B cell (primary cell): ENCODE measurements at regions of chr15 and their contacts with region 1.

Region 1: DNA sequence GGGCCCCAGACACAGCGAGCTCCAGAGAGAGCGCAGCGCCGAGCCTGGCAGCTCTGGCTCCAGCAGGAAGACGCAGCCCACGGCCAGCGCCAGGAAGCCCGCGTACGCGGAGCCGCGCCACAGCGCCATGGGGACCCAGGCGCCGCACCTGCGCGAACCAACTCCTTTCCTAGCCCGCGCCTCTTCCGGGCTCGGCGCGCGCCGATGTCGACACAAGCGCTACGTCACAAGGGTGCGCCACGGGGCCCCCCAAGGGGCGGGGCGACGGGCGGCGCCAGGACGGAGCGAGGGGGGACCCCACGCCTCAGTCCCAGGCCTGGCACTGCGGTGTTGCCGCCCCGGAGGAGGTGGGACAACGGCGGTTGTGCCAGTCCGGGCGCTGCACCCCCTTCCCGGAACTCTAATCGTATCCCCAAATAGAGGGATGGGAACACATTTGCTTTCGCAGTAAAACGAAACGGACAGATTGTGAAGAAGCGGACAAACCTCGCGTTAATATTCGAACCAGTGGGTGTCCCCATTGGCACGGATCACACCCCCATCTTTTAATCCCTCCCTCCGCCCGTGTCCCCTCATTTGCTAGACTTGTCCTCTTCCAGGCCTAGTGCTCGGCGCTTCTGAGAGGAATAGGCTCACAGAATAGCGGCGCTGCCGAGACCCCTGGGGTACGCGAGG is at the start of gene ADPGK:
- DNase-seq: peak; percentile 98
- ATAC-seq: peak; percentile 84
- H3K4me3 ChIP-seq: peak within 1 kb of the TSS; percentile 65 to 97 (median 95)
- H3K4me3 Mint-ChIP-seq: peak within 1 kb of the TSS; percentile 92
- H3K27ac ChIP-seq: peak within 1 kb of the TSS; percentile 97 to 98
- H3K27ac Mint-ChIP-seq: peak within 1 kb of the TSS; percentile 97
- H3K4me1 ChIP-seq: peaks cover 28 to 32% of the 10 kb centered on the region in 2 donors
- H3K4me1 Mint-ChIP-seq: peaks cover 41% of the 10 kb centered on the region
- H3K27me3 ChIP-seq: no peaks in the 10 kb centered on the region
- H3K27me3 Mint-ChIP-seq: no peaks in the 10 kb centered on the region
- CTCF ChIP-seq: no peak
- total RNA-seq, gene ADPGK: 128 and 135 TPM in 2 replicates

Region 2: GRCh38 chr15:72231066-72231846 is 552.4 kb before region 1 on chr15 and contains the start of gene PKM:
- CTCF ChIA-PET with region 1: no interaction called
- POLR2A ChIA-PET with region 1: interaction called, 14 read pairs
- intact Hi-C with region 1: loop called (anchors 5 kb)
- DNase-seq: peak; percentile 96
- ATAC-seq: peak; percentile 52
- H3K4me3 ChIP-seq: peak within 1 kb of the TSS; percentile 77 to 96 (median 93)
- H3K4me3 Mint-ChIP-seq: peak within 1 kb of the TSS; percentile 94
- H3K27ac ChIP-seq: peak within 1 kb of the TSS; percentile 91 to 94
- H3K27ac Mint-ChIP-seq: peak within 1 kb of the TSS; percentile 97
- H3K4me1 ChIP-seq: peaks cover 37 to 44% of the 10 kb centered on the region in 2 donors
- H3K4me1 Mint-ChIP-seq: peaks cover 38% of the 10 kb centered on the region
- H3K27me3 ChIP-seq: no peaks in the 10 kb centered on the region
- H3K27me3 Mint-ChIP-seq: no peaks in the 10 kb centered on the region
- CTCF ChIP-seq: no peak
- total RNA-seq, gene PKM: 306 and 323 TPM in 2 replicates

Region 3: DNA sequence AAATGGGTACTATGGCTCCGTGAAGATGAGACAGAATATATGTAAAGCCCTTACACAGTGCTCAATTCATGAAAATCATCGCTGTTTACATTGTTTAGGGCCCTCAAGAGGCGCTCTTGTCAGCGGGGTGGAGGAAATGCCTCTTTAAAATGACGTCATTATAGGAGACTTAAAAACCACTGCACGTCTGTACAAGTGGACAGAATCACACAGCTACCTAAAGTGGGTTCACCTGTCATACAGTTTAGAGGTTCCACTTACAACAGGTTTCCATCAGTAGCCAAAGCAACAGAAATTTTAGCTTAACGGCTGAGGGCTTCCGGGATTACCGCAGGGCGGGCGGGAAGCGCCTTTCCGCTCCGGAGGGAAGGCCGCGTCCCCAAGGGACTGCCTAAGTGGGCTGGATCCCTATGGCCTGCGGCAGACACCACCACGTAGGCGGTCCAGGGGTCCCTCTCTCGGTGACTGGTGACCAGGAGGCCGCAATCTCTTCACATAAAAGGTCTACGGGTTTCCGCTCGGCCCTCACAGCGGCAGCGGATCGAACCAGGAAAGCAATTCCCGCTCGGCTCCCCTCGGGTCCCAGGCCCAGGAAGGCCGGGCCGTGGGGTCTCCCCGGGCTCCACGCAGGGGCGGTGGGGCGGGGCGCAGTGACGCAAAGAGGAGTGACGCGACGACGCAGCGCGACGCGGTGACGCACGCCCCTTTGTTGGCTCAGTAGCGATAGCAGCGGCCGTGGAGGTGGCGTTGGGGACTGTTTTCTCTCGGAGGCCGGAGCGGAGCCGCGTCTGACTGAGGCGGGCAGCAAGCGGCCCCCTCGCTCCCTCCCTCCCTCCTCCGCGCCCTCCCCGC is 309.9 kb before region 1 on chr15 and contains the start of gene ARIH1:
- CTCF ChIA-PET with region 1: no interaction called
- POLR2A ChIA-PET with region 1: no interaction called
- intact Hi-C with region 1: loop called (anchors 5 kb)
- DNase-seq: peak; percentile 99
- ATAC-seq: peak; percentile 74
- H3K4me3 ChIP-seq: peak within 1 kb of the TSS; percentile 90 to 98 (median 97)
- H3K4me3 Mint-ChIP-seq: peak within 1 kb of the TSS; percentile 95
- H3K27ac ChIP-seq: peak within 1 kb of the TSS; percentile 100
- H3K27ac Mint-ChIP-seq: peak within 1 kb of the TSS; percentile 99
- H3K4me1 ChIP-seq: peaks cover 26 to 38% of the 10 kb centered on the region in 2 donors
- H3K4me1 Mint-ChIP-seq: peaks cover 42% of the 10 kb centered on the region
- H3K27me3 ChIP-seq: no peaks in the 10 kb centered on the region
- H3K27me3 Mint-ChIP-seq: no peaks in the 10 kb centered on the region
- CTCF ChIP-seq: peak; percentile 34
- total RNA-seq, gene ARIH1: 199 and 227 TPM in 2 replicates

Region 4: GRCh38 chr15:72671535-72671934 is 112.2 kb before region 1 on chr15:
- CTCF ChIA-PET with region 1: no interaction called
- POLR2A ChIA-PET with region 1: no interaction called
- intact Hi-C with region 1: no loop called
- DNase-seq: no peak
- ATAC-seq: no peak
- H3K4me3 ChIP-seq: no peak overlapping the region
- H3K4me3 Mint-ChIP-seq: no peak overlapping the region
- H3K27ac ChIP-seq: no peak overlapping the region
- H3K27ac Mint-ChIP-seq: no peak overlapping the region
- H3K4me1 ChIP-seq: peaks cover 3 to 5% of the 10 kb centered on the region in 2 donors
- H3K4me1 Mint-ChIP-seq: peaks cover 4% of the 10 kb centered on the region
- H3K27me3 ChIP-seq: peaks cover 0 to 5% (median 2%) of the 10 kb centered on the region in 4 experiments
- H3K27me3 Mint-ChIP-seq: peaks cover 15% of the 10 kb centered on the region
- CTCF ChIP-seq: no peak

Region 5: GRCh38 chr15:72770673-72771328 is 12.9 kb before region 1 on chr15:
- CTCF ChIA-PET with region 1: interaction called, 5 read pairs
- POLR2A ChIA-PET with region 1: no interaction called
- intact Hi-C with region 1: loop called (anchors 1 kb)
- DNase-seq: no peak
- ATAC-seq: no peak
- H3K4me3 ChIP-seq: no peak overlapping the region
- H3K4me3 Mint-ChIP-seq: no peak overlapping the region
- H3K27ac ChIP-seq: peak overlapping the region in 1 of 2 donors; percentile 14
- H3K27ac Mint-ChIP-seq: peak overlapping the region; percentile 22
- H3K4me1 ChIP-seq: peaks cover 23% of the 10 kb centered on the region in 2 donors
- H3K4me1 Mint-ChIP-seq: peaks cover 30% of the 10 kb centered on the region
- H3K27me3 ChIP-seq: no peaks in the 10 kb centered on the region
- H3K27me3 Mint-ChIP-seq: no peaks in the 10 kb centered on the region
- CTCF ChIP-seq: peak; percentile 24

Region 6: GRCh38 chr15:72813345-72814004 is 29.8 kb after region 1 on chr15:
- CTCF ChIA-PET with region 1: no interaction called
- POLR2A ChIA-PET with region 1: no interaction called
- intact Hi-C with region 1: no loop called
- DNase-seq: no peak
- ATAC-seq: no peak
- H3K4me3 ChIP-seq: no peak overlapping the region
- H3K4me3 Mint-ChIP-seq: no peak overlapping the region
- H3K27ac ChIP-seq: no peak overlapping the region
- H3K27ac Mint-ChIP-seq: no peak overlapping the region
- H3K4me1 ChIP-seq: peaks cover 0 to 6% of the 10 kb centered on the region in 2 donors
- H3K4me1 Mint-ChIP-seq: peaks cover 3% of the 10 kb centered on the region
- H3K27me3 ChIP-seq: peaks cover 0 to 11% (median 0%) of the 10 kb centered on the region in 4 experiments
- H3K27me3 Mint-ChIP-seq: peaks cover 34% of the 10 kb centered on the region
- CTCF ChIP-seq: no peak

Region 7: DNA sequence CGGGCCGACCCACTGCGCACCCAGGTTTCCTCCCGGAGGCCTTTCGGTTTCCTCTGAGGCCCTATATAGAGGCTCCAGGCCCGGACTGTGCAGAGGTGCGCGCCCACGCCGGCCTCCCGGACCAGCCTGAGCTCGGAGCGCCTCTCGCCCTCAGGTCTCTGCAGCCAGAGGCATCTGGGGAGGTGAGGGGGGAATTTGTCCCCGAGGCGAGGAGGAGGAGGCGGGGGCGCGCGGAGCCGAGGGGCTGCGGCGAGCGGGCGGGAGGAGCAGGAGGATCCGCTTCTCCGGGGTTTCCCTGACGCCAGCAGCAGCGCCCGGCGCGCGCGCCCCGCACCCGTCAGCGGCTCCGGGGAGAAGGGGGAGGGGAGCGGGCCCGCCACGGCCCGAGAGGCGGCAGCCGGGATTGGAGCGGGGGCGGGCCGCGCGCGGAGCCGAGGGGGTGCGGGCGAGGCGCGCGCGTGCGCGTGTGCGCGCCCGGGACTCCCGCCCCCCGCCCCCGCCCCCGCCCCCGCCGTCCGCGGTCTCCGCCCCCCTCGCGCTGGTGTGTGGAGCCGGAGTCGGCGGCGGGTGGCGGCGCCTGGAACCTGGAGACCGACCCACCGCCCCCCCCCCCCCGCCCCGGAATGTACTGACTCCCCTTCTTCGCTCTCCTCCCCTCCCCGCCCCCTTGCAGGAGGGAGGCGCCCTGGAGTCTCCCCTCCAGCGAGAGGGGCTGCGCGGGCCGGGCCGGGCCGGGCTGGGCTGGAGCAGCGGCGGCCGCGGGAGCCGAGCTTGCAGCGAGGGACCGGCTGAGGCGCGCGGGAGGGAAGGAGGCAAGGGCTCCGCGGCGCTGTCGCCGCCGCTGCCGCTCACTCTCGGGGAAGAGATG is 268.3 kb after region 1 on chr15 and contains the start of gene NEO1:
- CTCF ChIA-PET with region 1: no interaction called
- POLR2A ChIA-PET with region 1: no interaction called
- intact Hi-C with region 1: loop called (anchors 2 kb)
- DNase-seq: peak; percentile 84
- ATAC-seq: peak; percentile 76
- H3K4me3 ChIP-seq: peak within 1 kb of the TSS in 4 of 5 experiments; percentile 55 to 78 (median 68)
- H3K4me3 Mint-ChIP-seq: peak within 1 kb of the TSS; percentile 81
- H3K27ac ChIP-seq: no peak within 1 kb of the TSS
- H3K27ac Mint-ChIP-seq: peak within 1 kb of the TSS; percentile 64
- H3K4me1 ChIP-seq: peaks cover 8 to 11% of the 10 kb centered on the region in 2 donors
- H3K4me1 Mint-ChIP-seq: peaks cover 10% of the 10 kb centered on the region
- H3K27me3 ChIP-seq: peaks cover 0 to 32% (median 24%) of the 10 kb centered on the region in 4 experiments
- H3K27me3 Mint-ChIP-seq: peaks cover 37% of the 10 kb centered on the region
- CTCF ChIP-seq: no peak
- total RNA-seq, gene NEO1: 3.9 and 5.6 TPM in 2 replicates